ENCODE measurements at regions of chr17 and their contacts with region 1.

Region 1: GRCh38 chr17:80876950-80877728 is 114.5 kb upstream of the CHMP6 start:
- DNase-seq: peak in 6 of 9 donors; percentile 18 to 68 (median 36)
- ATAC-seq: peak; percentile 46
- H3K4me3 ChIP-seq: peak overlapping the region; percentile 22
- H3K4me3 Mint-ChIP-seq: peak overlapping the region; percentile 70 to 96 (median 79)
- H3K27ac ChIP-seq: peak overlapping the region; percentile 5
- H3K27ac Mint-ChIP-seq: peak overlapping the region; percentile 20 to 99 (median 86)
- H3K4me1 ChIP-seq: peaks cover 15 to 35% of the 10 kb centered on the region in 2 donors
- H3K4me1 Mint-ChIP-seq: peaks cover 31 to 55% (median 45%) of the 10 kb centered on the region in 7 donors
- H3K27me3 ChIP-seq: no peaks in the 10 kb centered on the region
- H3K27me3 Mint-ChIP-seq: no peaks in the 10 kb centered on the region

Region 2: DNA sequence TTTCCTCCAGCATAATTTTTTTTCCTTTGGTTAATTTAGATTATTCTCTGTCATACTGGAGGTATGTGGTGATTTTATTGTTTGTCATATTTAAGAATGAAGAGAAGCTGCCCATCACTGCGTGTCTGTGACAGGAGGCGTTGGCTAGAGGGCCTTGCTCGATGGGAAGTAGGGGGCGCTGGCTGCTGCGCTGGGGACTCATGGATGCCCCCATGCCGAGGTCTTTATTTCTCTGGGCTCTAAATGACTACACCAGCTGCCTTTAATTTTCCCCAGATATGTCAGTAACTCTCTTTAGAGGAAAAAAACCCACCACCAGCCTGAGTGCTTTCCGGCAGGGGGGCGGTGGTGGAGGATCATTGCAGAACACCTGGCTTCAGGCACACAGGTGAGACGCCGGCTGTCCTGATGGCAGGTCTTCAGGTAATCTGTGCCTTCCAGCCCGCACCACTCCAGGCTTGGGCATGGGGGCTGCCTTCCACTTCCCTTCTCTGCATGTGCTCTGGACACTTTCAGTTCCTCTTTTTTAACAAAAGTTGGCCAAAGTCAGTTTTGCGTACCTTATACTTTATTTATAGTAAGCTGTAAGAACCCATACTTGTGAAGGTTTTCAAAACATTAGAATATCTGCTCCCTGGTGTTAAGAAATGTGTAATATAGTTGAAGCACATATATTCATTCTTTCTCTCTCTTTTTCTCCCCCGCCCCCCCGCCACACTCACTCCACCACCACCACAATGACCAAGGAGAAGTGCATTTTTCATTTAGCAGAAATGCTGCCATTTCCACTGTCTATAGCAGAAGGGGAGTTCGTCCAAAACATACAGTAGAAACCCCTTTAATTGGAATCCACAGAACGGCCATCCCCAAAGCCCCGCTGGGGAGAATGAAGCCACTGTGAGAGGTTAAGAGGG is 139.8 kb before region 1 on chr17:
- CTCF ChIA-PET with region 1: no interaction called
- POLR2A ChIA-PET with region 1: no interaction called
- intact Hi-C with region 1: no loop called
- DNase-seq: no peak
- ATAC-seq: peak; percentile 50
- H3K4me3 ChIP-seq: no peak overlapping the region
- H3K4me3 Mint-ChIP-seq: peak overlapping the region in 4 of 10 donors; percentile 27 to 79 (median 42)
- H3K27ac ChIP-seq: peak overlapping the region; percentile 70
- H3K27ac Mint-ChIP-seq: peak overlapping the region; percentile 30 to 96 (median 87)
- H3K4me1 ChIP-seq: peaks cover 0 to 45% of the 10 kb centered on the region in 2 donors
- H3K4me1 Mint-ChIP-seq: peaks cover 24 to 91% (median 75%) of the 10 kb centered on the region in 7 donors
- H3K27me3 ChIP-seq: no peaks in the 10 kb centered on the region
- H3K27me3 Mint-ChIP-seq: no peaks in the 10 kb centered on the region

Region 3: DNA sequence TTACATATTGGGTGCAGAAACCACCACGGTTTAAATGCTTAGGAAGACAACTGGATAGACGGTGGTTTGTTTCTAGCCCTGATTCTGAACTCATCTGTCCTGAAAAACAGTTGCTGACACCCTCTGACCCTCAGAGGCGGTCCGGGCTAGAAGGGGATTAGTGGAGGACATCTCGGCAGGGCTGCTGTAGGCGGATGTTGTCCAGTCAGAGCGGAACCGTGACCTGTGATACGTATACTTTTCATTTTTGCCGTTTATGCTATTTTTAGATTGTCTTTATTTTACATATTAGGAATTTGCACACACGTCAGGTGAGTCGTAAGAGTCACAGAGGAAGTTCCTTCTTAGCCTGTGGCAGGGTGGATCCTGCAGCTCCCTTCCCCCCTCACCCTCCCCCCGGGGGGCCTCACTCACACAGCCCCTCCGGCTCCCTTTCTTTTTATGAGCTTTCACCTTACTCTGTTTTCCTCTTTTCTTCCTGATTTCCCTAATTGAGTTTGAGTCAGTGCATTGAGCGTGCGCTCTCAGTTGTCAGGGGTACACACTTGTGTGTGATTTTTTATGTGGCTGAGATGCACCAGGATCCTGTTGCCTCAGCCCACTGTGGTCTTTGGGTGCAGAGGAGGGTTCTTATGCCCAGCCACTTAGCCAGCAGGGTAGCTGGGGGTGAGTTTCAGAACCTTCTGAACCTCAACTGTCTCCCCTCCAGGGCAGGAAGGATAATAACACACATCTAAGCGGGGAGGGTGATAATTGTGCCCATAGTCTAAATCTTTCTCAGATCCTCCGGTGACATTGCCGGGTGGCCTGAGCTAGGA is 96.5 kb before region 1 on chr17:
- CTCF ChIA-PET with region 1: no interaction called
- POLR2A ChIA-PET with region 1: no interaction called
- intact Hi-C with region 1: loop called in 1 of 2 experiments (anchors 5 kb)
- DNase-seq: peak in 3 of 9 donors; percentile 29 to 57 (median 43)
- ATAC-seq: peak; percentile 40
- H3K4me3 ChIP-seq: peak overlapping the region; percentile 45
- H3K4me3 Mint-ChIP-seq: peak overlapping the region; percentile 62 to 96 (median 82)
- H3K27ac ChIP-seq: peak overlapping the region; percentile 70
- H3K27ac Mint-ChIP-seq: peak overlapping the region; percentile 87 to 99 (median 94)
- H3K4me1 ChIP-seq: peaks cover 38 to 57% of the 10 kb centered on the region in 2 donors
- H3K4me1 Mint-ChIP-seq: peaks cover 30 to 90% (median 77%) of the 10 kb centered on the region in 7 donors
- H3K27me3 ChIP-seq: no peaks in the 10 kb centered on the region
- H3K27me3 Mint-ChIP-seq: no peaks in the 10 kb centered on the region

Region 4: GRCh38 chr17:80949451-80950421 is 72.6 kb after region 1 on chr17:
- CTCF ChIA-PET with region 1: no interaction called
- POLR2A ChIA-PET with region 1: no interaction called
- intact Hi-C with region 1: no loop called
- DNase-seq: no peak
- ATAC-seq: no peak
- H3K4me3 ChIP-seq: no peak overlapping the region
- H3K4me3 Mint-ChIP-seq: no peak overlapping the region
- H3K27ac ChIP-seq: no peak overlapping the region
- H3K27ac Mint-ChIP-seq: peak overlapping the region in 1 of 9 donors; percentile 4
- H3K4me1 ChIP-seq: no peaks in the 10 kb centered on the region
- H3K4me1 Mint-ChIP-seq: no peaks in the 10 kb centered on the region
- H3K27me3 ChIP-seq: no peaks in the 10 kb centered on the region
- H3K27me3 Mint-ChIP-seq: no peaks in the 10 kb centered on the region